H1 (cell line): ENCODE measurements at regions of chr1 and their contacts with region 1.

Region 1: DNA sequence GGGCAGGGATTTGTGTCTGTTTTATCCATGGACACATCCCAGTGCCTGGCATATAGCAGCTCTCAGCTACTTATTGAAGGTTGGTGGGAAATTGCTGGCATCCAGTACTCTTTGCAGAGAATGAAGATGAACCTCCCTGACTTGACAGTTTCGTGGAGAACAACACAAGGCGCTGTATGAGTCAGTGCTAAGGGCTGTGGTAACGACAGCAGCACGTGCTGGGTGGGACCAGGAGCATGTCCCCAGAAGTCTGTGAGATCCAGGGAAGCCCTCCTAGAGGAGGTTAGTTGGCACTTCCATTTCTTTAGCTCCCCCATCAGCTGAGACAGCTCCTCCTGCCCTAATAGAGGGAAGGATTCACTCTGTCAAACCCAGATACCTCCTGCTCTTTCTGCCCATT is 25.9 kb upstream of the IL19 start:
- DNase-seq: no peak
- H3K4me3 ChIP-seq: no peak overlapping the region
- H3K27ac ChIP-seq: no peak overlapping the region
- H3K4me1 ChIP-seq: no peaks in the 10 kb centered on the region
- H3K27me3 ChIP-seq: no peaks in the 10 kb centered on the region; a peak in 1 of 7 replicates
- CTCF ChIP-seq: no peak
- EP300 ChIP-seq: no peak
- POLR2A ChIP-seq: no peak
- RAD21 ChIP-seq: no peak

Region 2: GRCh38 chr1:206583707-206584648 is 160.7 kb before region 1 on chr1:
- CTCF ChIA-PET with region 1: no interaction called
- POLR2A ChIA-PET with region 1: no interaction called
- DNase-seq: peak; percentile 36 to 91
- H3K4me3 ChIP-seq: no peak overlapping the region
- H3K27ac ChIP-seq: no peak overlapping the region
- H3K4me1 ChIP-seq: no peaks in the 10 kb centered on the region
- H3K27me3 ChIP-seq: no peaks in the 10 kb centered on the region
- CTCF ChIP-seq: peak; percentile 86 to 88 (median 87)
- EP300 ChIP-seq: no peak
- POLR2A ChIP-seq: no peak
- RAD21 ChIP-seq: peak; percentile 89 to 91

Region 3: GRCh38 chr1:206672844-206673758 is 71.6 kb before region 1 on chr1:
- CTCF ChIA-PET with region 1: no interaction called
- POLR2A ChIA-PET with region 1: no interaction called
- DNase-seq: no peak
- H3K4me3 ChIP-seq: no peak overlapping the region
- H3K27ac ChIP-seq: no peak overlapping the region
- H3K4me1 ChIP-seq: peaks cover 2 to 15% (median 4%) of the 10 kb centered on the region in 4 experiments; a peak in 5 of 7 replicates
- H3K27me3 ChIP-seq: no peaks in the 10 kb centered on the region
- CTCF ChIP-seq: no peak
- EP300 ChIP-seq: no peak
- POLR2A ChIP-seq: no peak
- RAD21 ChIP-seq: no peak

Region 4: DNA sequence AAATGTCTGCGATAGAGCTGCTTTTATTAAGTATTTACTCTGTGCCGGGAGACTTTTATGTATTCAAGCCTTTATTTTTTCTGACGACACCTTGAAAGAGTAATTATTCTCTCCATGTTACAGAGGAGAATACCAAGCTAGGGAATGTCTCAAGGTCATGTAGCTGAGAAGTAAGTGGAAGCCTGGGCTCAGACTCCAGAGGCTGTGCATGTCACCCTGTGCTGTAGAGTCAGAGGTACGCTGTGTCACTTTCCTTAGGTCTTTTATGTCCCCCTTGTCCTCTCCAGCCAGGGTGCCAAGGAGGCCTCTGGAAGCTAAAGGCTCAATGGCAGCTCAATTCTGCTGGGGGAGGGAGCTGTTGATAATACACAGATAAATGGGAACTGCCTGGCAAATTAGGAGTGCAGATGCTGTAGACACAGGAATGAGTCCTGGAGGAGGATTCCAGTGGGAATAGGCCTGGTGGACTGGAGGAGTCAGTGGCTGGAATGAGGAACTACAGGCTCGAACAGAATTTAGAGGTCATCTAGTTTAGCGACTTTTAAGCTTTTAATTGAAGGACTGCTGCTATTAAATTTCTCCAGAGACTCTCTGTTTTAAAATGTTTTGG is 16.6 kb after region 1 on chr1:
- CTCF ChIA-PET with region 1: interaction called, 16 read pairs
- POLR2A ChIA-PET with region 1: no interaction called
- DNase-seq: no peak
- H3K4me3 ChIP-seq: no peak overlapping the region
- H3K27ac ChIP-seq: no peak overlapping the region
- H3K4me1 ChIP-seq: no peaks in the 10 kb centered on the region
- H3K27me3 ChIP-seq: no peaks in the 10 kb centered on the region; a peak in 1 of 7 replicates
- CTCF ChIP-seq: peak in 1 of 3 experiments; percentile 39; a peak in 2 of 4 replicates
- EP300 ChIP-seq: no peak
- POLR2A ChIP-seq: no peak
- RAD21 ChIP-seq: no peak